Left ventricle myocardium inferior (tissue), 1 donor: ENCODE measurements at regions of chr1 and their contacts with region 1.

Region 1: GRCh38 chr1:94247138-94248094 is 10.0 kb upstream of the ARHGAP29 start:
- DNase-seq: peak; percentile 85
- H3K4me3 ChIP-seq: peak overlapping the region; percentile 80
- H3K27ac ChIP-seq: peak overlapping the region; percentile 94
- H3K4me1 ChIP-seq: peaks cover 27% of the 10 kb centered on the region
- H3K27me3 ChIP-seq: no peaks in the 10 kb centered on the region
- CTCF ChIP-seq: no peak

Region 2: GRCh38 chr1:94180650-94181049 is 66.8 kb before region 1 on chr1:
- intact Hi-C with region 1: no loop called
- DNase-seq: no peak
- H3K4me3 ChIP-seq: no peak overlapping the region
- H3K27ac ChIP-seq: peak overlapping the region; percentile 57
- H3K4me1 ChIP-seq: peaks cover 39% of the 10 kb centered on the region
- H3K27me3 ChIP-seq: no peaks in the 10 kb centered on the region
- CTCF ChIP-seq: no peak

Region 3: DNA sequence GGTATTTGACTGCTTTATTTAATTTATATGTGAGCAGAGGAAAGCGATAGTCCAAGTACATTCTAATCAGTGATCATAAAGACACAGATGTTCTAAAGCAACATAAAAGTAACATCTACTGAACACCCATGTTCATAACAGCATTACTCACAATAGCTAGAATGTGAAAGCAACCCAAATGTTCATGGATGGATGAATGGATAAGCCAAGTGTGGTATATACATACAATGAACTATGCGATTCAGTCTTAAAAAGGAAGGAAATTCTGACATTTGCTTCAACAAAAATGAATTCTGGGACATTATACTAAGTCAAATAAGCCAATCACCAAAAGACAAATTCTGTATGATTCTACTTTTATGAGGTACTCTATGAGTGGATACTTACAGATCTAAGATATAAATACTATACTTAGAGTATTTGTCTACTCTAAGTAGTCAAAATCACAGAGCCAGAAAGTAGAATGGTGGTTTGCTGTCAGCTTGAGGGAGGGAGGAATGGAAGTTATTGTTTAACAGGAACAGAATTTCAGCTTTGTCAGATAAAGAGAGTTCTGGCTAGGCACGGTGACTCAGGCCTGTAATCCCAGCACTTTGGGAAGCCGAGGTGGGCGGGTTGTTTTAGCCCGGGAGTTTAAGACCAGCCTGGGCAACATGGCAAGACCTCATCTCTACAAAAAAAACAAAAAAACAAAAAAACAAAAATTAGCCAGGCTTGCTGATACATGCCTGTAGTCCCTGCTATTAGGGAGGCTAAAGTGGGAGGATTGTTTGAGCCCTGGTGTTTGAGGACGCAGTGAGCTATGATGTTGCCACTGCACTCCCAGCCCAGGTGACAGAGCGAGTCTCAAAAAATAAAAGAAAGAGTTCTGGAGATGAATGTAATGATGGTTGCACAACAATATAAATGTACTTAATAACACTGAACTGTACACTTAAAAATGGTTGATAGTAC is 69.7 kb after region 1 on chr1:
- intact Hi-C with region 1: no loop called
- DNase-seq: no peak
- H3K4me3 ChIP-seq: no peak overlapping the region
- H3K27ac ChIP-seq: peak overlapping the region; percentile 10
- H3K4me1 ChIP-seq: peaks cover 18% of the 10 kb centered on the region
- H3K27me3 ChIP-seq: no peaks in the 10 kb centered on the region
- CTCF ChIP-seq: no peak

Region 4: GRCh38 chr1:94329986-94330385 is 82.6 kb after region 1 on chr1:
- intact Hi-C with region 1: loop called (anchors 5 kb)
- DNase-seq: no peak
- H3K4me3 ChIP-seq: no peak overlapping the region
- H3K27ac ChIP-seq: peak overlapping the region; percentile 81
- H3K4me1 ChIP-seq: peaks cover 68% of the 10 kb centered on the region
- H3K27me3 ChIP-seq: no peaks in the 10 kb centered on the region
- CTCF ChIP-seq: peak; percentile 61